Breast epithelium (tissue), 4 donors: ENCODE measurements at regions of chr17 and their contacts with region 1.

Region 1: DNA sequence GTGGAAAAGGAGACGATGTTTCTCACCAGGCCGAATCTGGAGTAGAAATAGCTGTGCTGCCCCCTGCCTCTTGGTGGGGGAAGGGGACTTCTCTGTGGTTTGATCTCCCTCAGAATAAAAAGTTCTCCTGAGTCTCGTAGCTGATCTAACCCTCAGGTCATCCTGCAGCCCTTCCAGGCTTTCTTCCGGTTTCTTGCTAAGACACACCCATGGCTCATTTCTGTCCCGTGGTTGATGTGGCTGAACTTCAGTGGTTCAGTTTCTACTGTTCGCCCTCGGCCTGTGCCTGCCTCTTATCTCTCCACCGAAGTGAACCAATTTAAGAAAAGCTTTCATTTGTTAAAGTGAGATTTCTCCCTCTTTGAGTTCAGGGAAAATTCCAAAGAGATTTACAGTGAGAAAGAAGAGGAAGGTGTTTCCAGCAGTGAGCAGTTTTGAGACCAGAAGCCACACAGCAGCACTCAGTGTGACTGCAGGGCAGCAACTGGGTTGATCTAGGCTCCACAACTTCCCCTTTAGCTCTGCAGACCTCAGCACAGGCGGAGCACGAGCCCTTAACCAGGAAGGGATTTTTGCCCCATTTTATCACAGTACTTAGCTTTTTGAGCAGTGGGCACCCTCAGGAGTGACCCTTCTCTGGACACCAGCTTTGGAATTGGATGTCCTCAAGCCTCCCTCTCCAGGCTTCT is 34.9 kb upstream of the CACNG5 start:
- DNase-seq: no peak
- H3K4me3 ChIP-seq: no peak overlapping the region
- H3K27ac ChIP-seq: no peak overlapping the region
- H3K4me1 ChIP-seq: no peaks in the 10 kb centered on the region
- H3K27me3 ChIP-seq: no peaks in the 10 kb centered on the region
- CTCF ChIP-seq: no peak
- POLR2A ChIP-seq: no peak

Region 2: GRCh38 chr17:65876985-65877384 is 923.0 kb before region 1 on chr17:
- intact Hi-C with region 1: no loop called
- DNase-seq: no peak
- H3K4me3 ChIP-seq: no peak overlapping the region
- H3K27ac ChIP-seq: no peak overlapping the region
- H3K4me1 ChIP-seq: no peaks in the 10 kb centered on the region
- H3K27me3 ChIP-seq: no peaks in the 10 kb centered on the region
- CTCF ChIP-seq: no peak
- POLR2A ChIP-seq: no peak

Region 3: GRCh38 chr17:66228887-66229782 is 570.9 kb before region 1 on chr17 and contains the start of gene APOH:
- intact Hi-C with region 1: loop called (anchors 10 kb)
- DNase-seq: no peak
- H3K4me3 ChIP-seq: no peak within 1 kb of the TSS
- H3K27ac ChIP-seq: no peak within 1 kb of the TSS
- H3K4me1 ChIP-seq: no peaks in the 10 kb centered on the region
- H3K27me3 ChIP-seq: no peaks in the 10 kb centered on the region
- CTCF ChIP-seq: no peak
- POLR2A ChIP-seq: no peak
- total RNA-seq, gene APOH: not detected